ENCODE measurements at regions of chr9 and their contacts with region 1.

Region 1: GRCh38 chr9:5714501-5715401 is 85.8 kb downstream of the RIC1 start:
- DNase-seq: peak; percentile 61
- ATAC-seq: peak; percentile 57
- H3K4me3 ChIP-seq: no peak overlapping the region
- H3K27ac ChIP-seq: peak overlapping the region; percentile 35; the same call in 1 of the 2 replicates
- H3K4me1 ChIP-seq: peaks cover 15% of the 10 kb centered on the region
- H3K27me3 ChIP-seq: no peaks in the 10 kb centered on the region
- CTCF ChIP-seq: peak; percentile 37
- POLR2A ChIP-seq: no peak
- RAD21 ChIP-seq: peak; percentile 40; the same call in 1 of the 2 replicates

Region 2: DNA sequence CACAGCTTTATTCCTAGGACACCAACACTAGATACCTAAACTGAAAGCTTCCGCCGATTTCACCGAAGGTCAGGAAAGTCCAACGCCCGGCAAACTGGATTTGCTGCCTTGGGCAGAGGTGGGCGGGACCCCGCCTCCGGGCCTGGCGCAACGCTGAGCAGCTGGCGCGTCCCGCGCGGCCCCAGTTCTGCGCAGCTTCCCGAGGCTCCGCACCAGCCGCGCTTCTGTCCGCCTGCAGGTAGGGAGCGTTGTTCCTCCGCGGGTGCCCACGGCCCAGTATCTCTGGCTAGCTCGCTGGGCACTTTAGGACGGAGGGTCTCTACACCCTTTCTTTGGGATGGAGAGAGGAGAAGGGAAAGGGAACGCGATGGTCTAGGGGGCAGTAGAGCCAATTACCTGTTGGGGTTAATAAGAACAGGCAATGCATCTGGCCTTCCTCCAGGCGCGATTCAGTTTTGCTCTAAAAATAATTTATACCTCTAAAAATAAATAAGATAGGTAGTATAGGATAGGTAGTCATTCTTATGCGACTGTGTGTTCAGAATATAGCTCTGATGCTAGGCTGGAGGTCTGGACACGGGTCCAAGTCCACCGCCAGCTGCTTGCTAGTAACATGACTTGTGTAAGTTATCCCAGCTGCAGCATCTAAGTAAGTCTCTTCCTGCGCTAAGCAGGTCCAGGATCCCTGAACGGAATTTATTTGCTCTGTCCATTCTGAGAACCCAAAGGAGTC is 264.2 kb before region 1 on chr9 and contains the start of gene CD274:
- CTCF ChIA-PET with region 1: no interaction called
- POLR2A ChIA-PET with region 1: no interaction called
- dilution Hi-C with region 1: no loop called
- in situ Hi-C with region 1: loop called (anchors 25 kb)
- intact Hi-C with region 1: no loop called
- DNase-seq: peak; percentile 93
- ATAC-seq: peak; percentile 96
- H3K4me3 ChIP-seq: peak within 1 kb of the TSS; percentile 62
- H3K27ac ChIP-seq: peak within 1 kb of the TSS; percentile 89
- H3K4me1 ChIP-seq: peaks cover 6% of the 10 kb centered on the region
- H3K27me3 ChIP-seq: no peaks in the 10 kb centered on the region
- CTCF ChIP-seq: peak; percentile 70
- POLR2A ChIP-seq: peak; percentile 83
- RAD21 ChIP-seq: peak; percentile 67
- total RNA-seq, gene CD274: 19.4 and 29.4 TPM in 2 replicates

Region 3: GRCh38 chr9:5629312-5630080 is 85.3 kb before region 1 on chr9:
- CTCF ChIA-PET with region 1: interaction called, 3 read pairs
- POLR2A ChIA-PET with region 1: interaction called, 5 read pairs
- dilution Hi-C with region 1: no loop called
- in situ Hi-C with region 1: no loop called
- intact Hi-C with region 1: loop called (anchors 5 kb)
- DNase-seq: no peak
- ATAC-seq: peak; percentile 10
- H3K4me3 ChIP-seq: peak overlapping the region; percentile 75
- H3K27ac ChIP-seq: peak overlapping the region; percentile 85
- H3K4me1 ChIP-seq: peaks cover 2% of the 10 kb centered on the region; the same call in 1 of the 2 replicates
- H3K27me3 ChIP-seq: no peaks in the 10 kb centered on the region
- CTCF ChIP-seq: no peak
- POLR2A ChIP-seq: no peak
- RAD21 ChIP-seq: no peak

Region 4: DNA sequence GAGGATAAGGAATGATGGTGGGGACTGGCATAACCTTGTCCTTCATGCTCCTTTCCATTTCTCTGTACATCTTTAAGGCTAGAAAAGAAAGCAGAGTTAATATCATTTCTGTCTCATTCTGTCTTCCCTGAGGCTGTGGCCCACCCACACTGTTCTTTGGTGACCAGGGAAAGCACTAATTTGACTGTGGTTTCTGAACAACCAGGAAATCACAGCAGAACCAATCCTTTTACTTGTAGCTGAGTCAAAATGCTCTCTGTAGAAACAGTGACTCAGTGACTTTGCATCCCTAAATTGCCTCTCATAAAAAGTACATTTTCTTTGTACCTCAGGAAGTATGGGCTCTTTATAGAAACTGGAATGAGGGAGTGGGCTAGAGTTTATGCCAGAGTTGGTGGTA is 529.0 kb after region 1 on chr9:
- CTCF ChIA-PET with region 1: no interaction called
- POLR2A ChIA-PET with region 1: no interaction called
- dilution Hi-C with region 1: no loop called
- in situ Hi-C with region 1: no loop called
- intact Hi-C with region 1: no loop called
- DNase-seq: peak; percentile 52
- ATAC-seq: no peak
- H3K4me3 ChIP-seq: no peak overlapping the region
- H3K27ac ChIP-seq: no peak overlapping the region
- H3K4me1 ChIP-seq: peaks cover 4% of the 10 kb centered on the region; the same call in 1 of the 2 replicates
- H3K27me3 ChIP-seq: no peaks in the 10 kb centered on the region
- CTCF ChIP-seq: no peak
- POLR2A ChIP-seq: no peak
- RAD21 ChIP-seq: no peak

Measured in IMR-90 (cell line).